ENCODE measurements at regions of chr17 and their contacts with region 1.

Region 1: GRCh38 chr17:51487947-51488346 is 227.6 kb downstream of the UTP18 start:
- DNase-seq: peak; percentile 33
- ATAC-seq: peak; percentile 90
- H3K4me3 Mint-ChIP-seq: peak overlapping the region; percentile 32
- H3K27ac Mint-ChIP-seq: no peak overlapping the region
- H3K4me1 Mint-ChIP-seq: peaks cover 5% of the 10 kb centered on the region
- H3K27me3 Mint-ChIP-seq: no peaks in the 10 kb centered on the region; the same call in 1 of the 2 replicates
- CTCF ChIP-seq: no peak

Region 2: DNA sequence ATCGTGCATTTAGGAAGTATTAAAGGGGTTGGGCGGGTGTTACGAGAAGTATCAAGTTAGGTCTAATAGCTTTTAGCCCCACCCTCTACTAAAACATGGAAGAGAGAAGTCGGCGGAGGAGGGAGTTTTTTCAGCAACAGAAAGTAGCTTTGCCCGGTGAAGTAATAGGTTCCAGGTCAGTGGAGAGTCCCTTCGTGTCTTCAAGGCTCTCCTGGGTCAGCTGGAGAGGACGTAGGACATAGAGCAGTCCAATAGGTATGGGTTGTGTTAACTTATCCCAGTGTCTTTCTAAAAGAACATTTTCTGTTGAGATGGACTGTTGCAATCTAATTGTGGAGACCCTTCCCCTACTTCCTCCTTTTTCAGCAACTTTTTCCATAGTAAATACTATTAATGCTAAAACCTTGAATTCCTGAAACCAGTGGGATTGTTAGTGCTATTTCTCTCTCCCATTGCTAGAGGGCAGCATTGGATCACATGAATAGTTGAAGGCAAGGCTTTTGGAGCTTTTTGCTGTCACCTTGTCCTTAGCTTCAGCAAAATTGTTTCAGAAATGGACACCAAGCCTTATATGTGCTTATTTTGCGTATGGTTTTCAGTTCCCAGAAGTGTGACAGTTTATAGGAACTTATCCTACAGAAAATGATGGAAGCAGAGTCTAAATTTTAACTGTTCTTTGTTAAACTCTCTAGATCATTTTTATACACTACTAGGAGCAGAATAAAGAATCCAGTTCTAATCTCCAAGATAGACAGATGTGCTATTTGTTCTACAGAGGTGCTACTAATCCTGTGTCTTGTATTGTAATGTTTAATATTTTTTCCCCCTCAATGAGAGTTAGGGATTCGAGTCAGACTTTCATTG is 189.2 kb before region 1 on chr17:
- CTCF ChIA-PET with region 1: interaction called, 10 read pairs
- POLR2A ChIA-PET with region 1: no interaction called
- DNase-seq: no peak
- ATAC-seq: peak; percentile 80
- H3K4me3 Mint-ChIP-seq: no peak overlapping the region
- H3K27ac Mint-ChIP-seq: peak overlapping the region; percentile 51
- H3K4me1 Mint-ChIP-seq: peaks cover 35% of the 10 kb centered on the region
- H3K27me3 Mint-ChIP-seq: no peaks in the 10 kb centered on the region
- CTCF ChIP-seq: peak; percentile 32; the same call in 1 of the 2 replicates

Region 3: GRCh38 chr17:51461578-51462004 is 26.4 kb before region 1 on chr17:
- CTCF ChIA-PET with region 1: interaction called, 27 read pairs
- POLR2A ChIA-PET with region 1: no interaction called
- DNase-seq: peak; percentile 79
- ATAC-seq: peak; percentile 100
- H3K4me3 Mint-ChIP-seq: no peak overlapping the region
- H3K27ac Mint-ChIP-seq: no peak overlapping the region
- H3K4me1 Mint-ChIP-seq: no peaks in the 10 kb centered on the region
- H3K27me3 Mint-ChIP-seq: no peaks in the 10 kb centered on the region; the same call in 1 of the 2 replicates
- CTCF ChIP-seq: peak; percentile 78

Region 4: DNA sequence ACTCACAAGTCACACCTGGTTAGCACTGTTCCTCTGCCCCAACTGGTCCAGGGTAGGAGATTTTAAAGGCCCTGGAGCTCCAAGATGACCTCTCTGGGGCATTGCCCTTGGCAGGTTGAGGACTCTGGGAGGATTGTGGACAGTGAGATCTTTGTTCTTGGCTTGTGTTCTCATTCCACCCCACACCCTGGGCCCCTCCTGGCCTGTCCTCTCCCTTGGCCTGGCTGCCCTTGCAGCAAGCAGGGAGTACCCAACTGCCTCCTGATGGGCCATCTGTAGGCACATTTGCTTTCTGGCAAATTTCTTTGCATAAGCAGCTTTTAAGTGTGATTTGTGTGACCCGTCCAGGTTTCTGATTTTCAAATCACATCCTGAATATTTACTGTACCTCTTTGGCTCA is 11.9 kb after region 1 on chr17:
- CTCF ChIA-PET with region 1: interaction called, 17 read pairs
- POLR2A ChIA-PET with region 1: no interaction called
- DNase-seq: no peak
- ATAC-seq: no peak
- H3K4me3 Mint-ChIP-seq: no peak overlapping the region
- H3K27ac Mint-ChIP-seq: no peak overlapping the region
- H3K4me1 Mint-ChIP-seq: no peaks in the 10 kb centered on the region
- H3K27me3 Mint-ChIP-seq: peaks cover 3% of the 10 kb centered on the region; the same call in 1 of the 2 replicates
- CTCF ChIP-seq: no peak

Region 5: GRCh38 chr17:51516924-51517323 is 29.0 kb after region 1 on chr17:
- CTCF ChIA-PET with region 1: interaction called, 11 read pairs
- POLR2A ChIA-PET with region 1: no interaction called
- DNase-seq: no peak
- ATAC-seq: no peak
- H3K4me3 Mint-ChIP-seq: no peak overlapping the region
- H3K27ac Mint-ChIP-seq: no peak overlapping the region
- H3K4me1 Mint-ChIP-seq: no peaks in the 10 kb centered on the region
- H3K27me3 Mint-ChIP-seq: peaks cover 4% of the 10 kb centered on the region; the same call in 1 of the 2 replicates
- CTCF ChIP-seq: no peak

Measured in WTC11 (cell line).